ENCODE measurements at regions of chr16 and their contacts with region 1.

Region 1: DNA sequence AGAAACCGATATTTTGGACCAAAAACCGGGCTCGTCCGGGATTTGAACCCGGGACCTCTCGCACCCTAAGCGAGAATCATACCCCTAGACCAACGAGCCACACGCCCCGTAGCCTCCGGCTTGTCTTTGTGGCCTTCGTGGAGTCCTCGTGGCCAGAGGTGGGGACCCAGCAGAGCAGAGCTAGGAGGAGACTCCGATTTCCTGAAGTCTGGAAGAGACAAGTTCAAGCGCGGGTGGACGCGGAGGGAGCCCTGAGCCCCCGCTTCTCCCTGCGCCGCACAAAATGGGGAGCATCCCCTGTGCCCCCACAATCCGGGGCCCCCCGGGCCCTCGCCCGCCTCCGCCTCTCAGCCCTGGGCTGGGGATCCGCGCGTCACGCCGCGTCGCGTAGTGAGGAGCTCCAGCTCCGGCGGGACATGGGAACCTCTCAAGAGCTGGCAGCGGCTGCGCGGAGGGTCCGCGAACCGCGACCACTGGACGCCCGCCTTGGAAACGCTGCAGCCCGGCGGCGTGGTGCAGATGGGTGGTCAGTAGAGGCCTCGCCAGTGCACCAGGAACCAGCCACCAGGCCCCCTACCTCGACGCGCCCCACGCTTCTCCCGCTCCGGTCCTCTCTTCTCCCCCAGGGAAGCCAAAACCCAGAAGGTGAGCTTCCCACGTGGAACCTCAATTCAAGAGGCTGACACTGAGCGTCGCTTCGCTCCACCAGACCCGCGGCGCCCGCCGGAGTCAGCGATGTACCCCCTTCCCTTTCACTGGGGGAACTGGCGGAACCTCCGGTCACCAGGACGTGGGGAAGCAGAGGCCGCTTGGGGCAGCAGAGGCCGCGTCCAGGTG is 5.2 kb upstream of the OR1F1 start:
- DNase-seq: peak; percentile 72
- H3K4me3 Mint-ChIP-seq: peak overlapping the region; percentile 87
- H3K27ac Mint-ChIP-seq: peak overlapping the region; percentile 87
- H3K4me1 Mint-ChIP-seq: peaks cover 6% of the 10 kb centered on the region
- H3K27me3 Mint-ChIP-seq: no peaks in the 10 kb centered on the region
- CTCF ChIP-seq: no peak

Region 2: GRCh38 chr16:3457434-3458252 is 274.8 kb after region 1 on chr16:
- CTCF ChIA-PET with region 1: no interaction called
- POLR2A ChIA-PET with region 1: interaction called, 3 read pairs
- intact Hi-C with region 1: loop called (anchors 1 kb)
- DNase-seq: peak; percentile 87
- H3K4me3 Mint-ChIP-seq: peak overlapping the region; percentile 84
- H3K27ac Mint-ChIP-seq: peak overlapping the region; percentile 75
- H3K4me1 Mint-ChIP-seq: peaks cover 31% of the 10 kb centered on the region
- H3K27me3 Mint-ChIP-seq: no peaks in the 10 kb centered on the region
- CTCF ChIP-seq: peak; percentile 34

Region 3: DNA sequence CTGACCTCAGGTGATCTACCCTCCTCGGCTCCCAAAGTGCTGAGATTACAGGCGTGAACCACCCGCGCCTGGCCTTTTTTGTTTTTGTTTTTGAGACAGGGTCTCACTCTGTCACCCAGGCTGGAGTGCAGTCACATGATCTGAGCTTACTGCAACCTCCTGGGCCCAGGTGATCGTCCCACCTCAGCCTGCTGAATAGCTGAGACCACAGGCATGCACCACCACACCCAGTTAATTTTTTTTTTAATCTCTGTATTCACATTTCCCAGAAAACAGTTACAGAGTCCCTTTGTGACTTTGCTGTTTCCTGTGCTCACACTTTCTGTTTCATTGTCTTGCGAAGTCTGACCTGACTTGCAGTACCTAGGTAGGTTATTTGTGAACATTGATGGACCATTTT is 320.7 kb after region 1 on chr16:
- CTCF ChIA-PET with region 1: interaction called, 3 read pairs
- POLR2A ChIA-PET with region 1: interaction called, 3 read pairs
- intact Hi-C with region 1: loop called (anchors 1 kb)
- DNase-seq: no peak
- H3K4me3 Mint-ChIP-seq: no peak overlapping the region
- H3K27ac Mint-ChIP-seq: no peak overlapping the region
- H3K4me1 Mint-ChIP-seq: peaks cover 4% of the 10 kb centered on the region
- H3K27me3 Mint-ChIP-seq: no peaks in the 10 kb centered on the region
- CTCF ChIP-seq: no peak